Dendritic cell treated with granulocyte-macrophage colony-stimulating factor and Interleukin-4, amounts not matched to agents 40 ng/mL and 50 ng/mL, for 4 days (primary cell): ENCODE measurements at regions of chr2 and their contacts with region 1.

Region 1: GRCh38 chr2:231104115-231104713 is 20.6 kb downstream of the HTR2B start:
- H3K4me3 Mint-ChIP-seq: no peak overlapping the region
- H3K27ac Mint-ChIP-seq: no peak overlapping the region
- H3K4me1 Mint-ChIP-seq: no peaks in the 10 kb centered on the region
- H3K27me3 Mint-ChIP-seq: no peaks in the 10 kb centered on the region

Region 2: DNA sequence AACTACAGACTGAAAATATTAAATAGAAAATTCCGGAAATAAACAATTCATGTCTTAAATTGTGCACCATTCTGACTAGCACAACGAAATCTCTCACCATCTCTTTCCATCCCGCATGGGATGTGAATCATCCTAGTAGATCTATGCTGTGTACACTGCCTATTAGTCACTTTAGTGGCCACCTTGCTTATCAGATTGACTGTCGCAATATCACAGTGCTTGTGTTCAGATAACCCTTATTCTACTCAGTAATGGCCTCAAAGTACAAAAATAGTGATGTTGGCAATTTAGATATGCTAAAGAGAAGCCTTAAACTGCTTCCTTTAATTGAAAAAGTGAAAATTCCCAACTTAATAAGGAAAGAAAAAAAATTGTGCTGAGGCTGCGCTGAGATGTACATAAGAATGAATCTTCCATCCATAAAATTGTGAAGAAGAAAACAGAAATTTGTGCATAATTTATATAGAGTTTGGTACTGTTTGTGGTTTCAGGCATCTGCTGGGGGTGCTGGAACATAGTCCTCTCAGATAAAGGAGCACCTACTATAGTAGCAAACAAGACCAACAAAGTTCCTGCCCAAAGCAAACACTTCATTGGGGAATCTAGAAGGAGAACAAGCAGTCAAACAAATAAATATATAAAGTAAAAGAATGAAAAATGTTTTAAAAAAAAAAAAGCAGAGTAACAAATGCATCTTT is 35.5 kb before region 1 on chr2:
- intact Hi-C with region 1: no loop called
- H3K4me3 Mint-ChIP-seq: no peak overlapping the region
- H3K27ac Mint-ChIP-seq: no peak overlapping the region
- H3K4me1 Mint-ChIP-seq: peaks cover 10% of the 10 kb centered on the region
- H3K27me3 Mint-ChIP-seq: no peaks in the 10 kb centered on the region

Region 3: GRCh38 chr2:231138699-231139098 is 34.5 kb after region 1 on chr2:
- intact Hi-C with region 1: no loop called
- H3K4me3 Mint-ChIP-seq: no peak overlapping the region
- H3K27ac Mint-ChIP-seq: no peak overlapping the region
- H3K4me1 Mint-ChIP-seq: peaks cover 9% of the 10 kb centered on the region
- H3K27me3 Mint-ChIP-seq: no peaks in the 10 kb centered on the region

Region 4: DNA sequence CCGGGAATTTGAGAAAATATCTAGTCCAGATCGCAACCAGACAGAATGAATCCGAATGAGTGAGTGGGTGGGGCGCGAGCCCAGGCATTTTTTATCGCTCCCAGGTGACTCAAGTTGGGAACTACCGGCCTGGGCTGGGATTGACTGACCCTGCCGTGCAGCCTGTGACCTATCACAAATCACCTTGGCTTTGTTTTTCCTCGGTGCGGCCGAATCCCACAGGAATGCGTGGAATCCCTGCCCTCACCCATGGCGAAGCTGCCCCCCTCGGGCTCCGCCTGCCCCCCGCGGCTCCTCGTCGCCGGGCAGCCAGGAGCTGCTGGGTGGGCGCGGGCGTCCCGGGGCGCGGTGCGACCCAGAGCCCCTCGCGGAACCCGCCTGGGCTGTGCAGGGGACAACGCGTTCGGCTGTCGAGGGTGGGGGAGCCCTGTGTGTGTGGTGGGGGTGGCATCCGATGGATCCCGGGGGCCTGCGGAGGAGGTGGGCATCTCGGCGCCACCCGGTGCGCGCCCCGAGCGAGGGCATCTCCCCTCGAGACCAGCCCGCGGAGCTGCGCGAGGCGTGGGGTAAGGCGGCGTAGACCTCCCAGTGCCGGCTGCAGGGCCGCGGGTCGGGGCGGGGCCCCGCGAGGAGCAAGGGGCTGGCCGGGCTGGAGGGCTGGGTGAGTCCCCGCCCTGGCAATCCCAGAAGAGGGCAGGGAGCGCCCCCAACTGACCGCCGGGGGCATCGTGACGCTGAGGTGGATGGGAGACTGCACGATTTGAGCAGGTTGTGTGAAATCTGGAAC is 307.8 kb after region 1 on chr2:
- intact Hi-C with region 1: loop called (anchors 2 kb)
- H3K4me3 Mint-ChIP-seq: peak overlapping the region; percentile 58
- H3K27ac Mint-ChIP-seq: no peak overlapping the region
- H3K4me1 Mint-ChIP-seq: peaks cover 9% of the 10 kb centered on the region
- H3K27me3 Mint-ChIP-seq: peaks cover 39% of the 10 kb centered on the region

Region 5: DNA sequence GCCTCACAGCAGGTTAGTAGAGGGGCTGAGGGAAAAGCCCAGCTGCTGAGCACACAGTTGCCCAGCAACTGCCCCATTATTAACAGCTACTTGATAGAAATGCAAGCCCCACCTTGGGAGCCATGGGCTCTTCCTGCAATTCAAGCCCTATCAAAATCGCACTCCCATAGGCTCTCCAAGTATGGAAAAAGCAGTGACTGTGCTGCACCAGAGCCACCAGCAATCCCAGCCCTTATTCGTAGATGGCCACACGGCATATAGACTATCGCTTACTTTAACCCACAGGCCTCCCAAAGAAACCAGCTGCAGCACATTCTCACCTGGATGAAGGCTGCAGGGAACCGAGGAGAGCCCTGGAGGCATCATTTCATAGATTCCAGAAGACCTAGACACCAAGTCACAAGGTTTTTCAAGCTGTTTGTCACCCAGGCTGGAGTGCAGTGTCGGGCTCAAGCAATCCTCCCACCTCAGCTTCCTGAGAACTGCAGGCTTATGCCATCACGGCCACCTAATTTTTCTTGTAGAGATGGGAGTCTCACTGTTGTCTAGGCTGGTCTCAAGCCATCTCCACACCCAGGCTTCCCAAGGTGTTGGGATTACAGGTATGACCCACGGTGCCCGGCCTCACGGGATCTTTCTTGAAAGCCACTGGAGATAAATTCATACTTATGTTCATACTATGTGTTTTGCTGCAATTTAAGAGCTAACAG is 348.7 kb after region 1 on chr2:
- intact Hi-C with region 1: loop called (anchors 2 kb)
- H3K4me3 Mint-ChIP-seq: no peak overlapping the region
- H3K27ac Mint-ChIP-seq: peak overlapping the region; percentile 32
- H3K4me1 Mint-ChIP-seq: no peaks in the 10 kb centered on the region
- H3K27me3 Mint-ChIP-seq: no peaks in the 10 kb centered on the region

Region 6: GRCh38 chr2:231503766-231504165 is 399.6 kb after region 1 on chr2:
- intact Hi-C with region 1: no loop called
- H3K4me3 Mint-ChIP-seq: no peak overlapping the region
- H3K27ac Mint-ChIP-seq: no peak overlapping the region
- H3K4me1 Mint-ChIP-seq: peaks cover 6% of the 10 kb centered on the region
- H3K27me3 Mint-ChIP-seq: no peaks in the 10 kb centered on the region